ENCODE measurements at regions of chr19 and their contacts with region 1.

Region 1: GRCh38 chr19:35352448-35353304 is 5.0 kb downstream of the FFAR1 start:
- DNase-seq: peak; percentile 28 to 85 (median 66)
- ATAC-seq: peak; percentile 94
- H3K4me3 ChIP-seq: no peak overlapping the region
- H3K4me3 Mint-ChIP-seq: no peak overlapping the region
- H3K27ac ChIP-seq: no peak overlapping the region
- H3K27ac Mint-ChIP-seq: peak overlapping the region; percentile 22
- H3K4me1 ChIP-seq: peaks cover 13% of the 10 kb centered on the region
- H3K4me1 Mint-ChIP-seq: peaks cover 9% of the 10 kb centered on the region
- H3K27me3 ChIP-seq: no peaks in the 10 kb centered on the region
- H3K27me3 Mint-ChIP-seq: peaks cover 8% of the 10 kb centered on the region
- CTCF ChIP-seq: peak; percentile 90

Region 2: DNA sequence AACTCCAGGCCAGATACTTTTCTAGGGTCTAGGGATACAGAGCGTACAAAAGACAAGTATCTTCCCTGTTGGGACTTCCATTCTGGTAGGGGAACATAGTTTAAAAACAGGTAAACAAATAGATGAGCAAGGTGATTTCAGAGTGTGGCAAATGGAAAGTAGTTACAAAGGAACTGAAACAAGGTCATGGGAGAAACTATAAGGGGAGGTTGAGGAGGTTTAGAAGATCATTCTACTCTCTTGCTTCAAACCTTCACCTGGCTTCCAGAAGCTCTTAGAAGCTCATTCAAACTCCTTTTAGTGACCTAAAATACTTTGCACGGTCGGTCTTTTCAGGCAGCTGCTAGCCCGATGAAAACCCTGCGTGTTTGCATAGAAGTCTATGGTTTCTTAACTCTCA is 104.5 kb after region 1 on chr19:
- CTCF ChIA-PET with region 1: interaction called, 27 read pairs
- POLR2A ChIA-PET with region 1: no interaction called
- intact Hi-C with region 1: no loop called
- DNase-seq: no peak
- ATAC-seq: no peak
- H3K4me3 ChIP-seq: no peak overlapping the region
- H3K4me3 Mint-ChIP-seq: no peak overlapping the region
- H3K27ac ChIP-seq: no peak overlapping the region
- H3K27ac Mint-ChIP-seq: no peak overlapping the region
- H3K4me1 ChIP-seq: peaks cover 12% of the 10 kb centered on the region
- H3K4me1 Mint-ChIP-seq: peaks cover 21% of the 10 kb centered on the region
- H3K27me3 ChIP-seq: no peaks in the 10 kb centered on the region
- H3K27me3 Mint-ChIP-seq: no peaks in the 10 kb centered on the region
- CTCF ChIP-seq: no peak

Region 3: DNA sequence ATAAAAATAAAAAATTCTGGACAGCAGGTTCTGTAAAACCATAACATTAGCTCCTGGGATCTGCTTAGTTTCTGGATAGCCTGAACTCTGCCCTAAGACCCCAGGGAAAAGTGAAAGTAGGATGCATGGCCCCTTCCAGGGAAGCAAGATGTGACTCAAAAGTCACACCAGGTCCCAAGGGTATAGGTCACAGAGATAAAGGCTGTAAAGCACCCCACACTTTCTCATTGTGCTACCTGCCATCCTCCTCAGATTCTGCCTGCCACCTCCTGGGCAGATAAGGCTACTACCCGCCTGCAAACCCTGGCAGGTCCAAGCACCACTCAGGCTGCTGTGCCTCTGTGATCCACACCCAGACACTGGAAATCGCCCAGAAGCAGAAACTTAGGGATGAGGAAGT is 116.0 kb after region 1 on chr19:
- CTCF ChIA-PET with region 1: interaction called, 104 read pairs
- POLR2A ChIA-PET with region 1: interaction called, 4 read pairs
- intact Hi-C with region 1: loop called in 1 of 2 experiments (anchors 1 kb)
- DNase-seq: peak; percentile 40 to 83 (median 68)
- ATAC-seq: peak; percentile 100
- H3K4me3 ChIP-seq: no peak overlapping the region
- H3K4me3 Mint-ChIP-seq: no peak overlapping the region
- H3K27ac ChIP-seq: no peak overlapping the region
- H3K27ac Mint-ChIP-seq: no peak overlapping the region
- H3K4me1 ChIP-seq: peaks cover 3% of the 10 kb centered on the region
- H3K4me1 Mint-ChIP-seq: peaks cover 8% of the 10 kb centered on the region
- H3K27me3 ChIP-seq: no peaks in the 10 kb centered on the region
- H3K27me3 Mint-ChIP-seq: no peaks in the 10 kb centered on the region
- CTCF ChIP-seq: peak; percentile 68

Region 4: DNA sequence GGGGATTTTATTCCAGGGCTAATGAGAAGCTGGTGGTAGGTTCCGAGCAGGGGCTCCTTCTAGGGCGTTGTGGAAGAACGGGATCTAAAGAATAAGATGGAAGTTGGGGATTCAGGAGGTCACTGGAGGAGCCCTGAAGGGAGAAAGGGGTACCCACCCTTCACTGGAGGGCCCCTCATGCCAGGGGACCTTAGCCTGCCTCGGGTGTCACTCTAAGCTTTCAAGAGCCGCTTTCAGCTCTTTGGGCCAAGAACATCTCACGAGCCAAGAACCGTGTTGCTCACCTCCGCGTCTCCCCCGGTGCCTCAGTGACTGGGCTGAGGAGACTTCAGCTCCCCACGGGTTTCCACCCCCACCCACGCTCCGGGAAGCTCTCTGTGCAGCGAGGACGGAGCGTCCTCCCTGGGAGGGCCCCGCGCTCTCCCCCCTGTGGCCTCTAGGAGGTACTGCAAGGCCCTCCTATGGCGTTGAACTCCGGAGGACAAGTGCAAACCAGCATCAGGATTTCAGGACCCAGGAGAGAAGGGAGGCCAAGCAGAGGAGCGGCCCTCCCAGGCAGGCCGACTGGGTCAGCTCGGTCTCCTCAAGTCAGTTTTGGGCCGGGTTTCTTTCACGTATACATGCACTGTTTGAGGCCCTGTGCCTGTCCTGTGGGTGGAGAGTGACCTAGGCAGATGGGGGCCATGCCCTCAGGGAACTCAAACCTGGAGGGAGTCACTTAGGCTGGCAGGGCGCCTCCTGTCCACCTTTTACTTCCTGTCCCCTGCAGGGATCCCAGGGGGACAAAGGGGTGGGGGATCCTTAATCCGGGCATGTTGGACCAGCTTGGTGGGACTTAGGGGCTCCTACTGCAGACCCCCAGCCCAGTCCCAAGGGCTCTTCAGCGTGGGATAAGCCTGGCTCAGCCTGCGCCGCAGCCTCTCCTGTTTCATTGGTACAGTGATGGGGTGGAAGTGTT is 142.7 kb after region 1 on chr19:
- CTCF ChIA-PET with region 1: interaction called, 40 read pairs
- POLR2A ChIA-PET with region 1: interaction called, 4 read pairs
- intact Hi-C with region 1: loop called in 1 of 2 experiments (anchors 1 kb)
- DNase-seq: peak; percentile 38 to 80 (median 61)
- ATAC-seq: peak; percentile 100
- H3K4me3 ChIP-seq: no peak overlapping the region
- H3K4me3 Mint-ChIP-seq: peak overlapping the region; percentile 22
- H3K27ac ChIP-seq: no peak overlapping the region
- H3K27ac Mint-ChIP-seq: no peak overlapping the region
- H3K4me1 ChIP-seq: no peaks in the 10 kb centered on the region
- H3K4me1 Mint-ChIP-seq: peaks cover 7% of the 10 kb centered on the region
- H3K27me3 ChIP-seq: no peaks in the 10 kb centered on the region
- H3K27me3 Mint-ChIP-seq: peaks cover 8% of the 10 kb centered on the region
- CTCF ChIP-seq: peak; percentile 97